Endothelial cell of umbilical vein (primary cell): ENCODE measurements at regions of chr17 and their contacts with region 1.

Region 1: DNA sequence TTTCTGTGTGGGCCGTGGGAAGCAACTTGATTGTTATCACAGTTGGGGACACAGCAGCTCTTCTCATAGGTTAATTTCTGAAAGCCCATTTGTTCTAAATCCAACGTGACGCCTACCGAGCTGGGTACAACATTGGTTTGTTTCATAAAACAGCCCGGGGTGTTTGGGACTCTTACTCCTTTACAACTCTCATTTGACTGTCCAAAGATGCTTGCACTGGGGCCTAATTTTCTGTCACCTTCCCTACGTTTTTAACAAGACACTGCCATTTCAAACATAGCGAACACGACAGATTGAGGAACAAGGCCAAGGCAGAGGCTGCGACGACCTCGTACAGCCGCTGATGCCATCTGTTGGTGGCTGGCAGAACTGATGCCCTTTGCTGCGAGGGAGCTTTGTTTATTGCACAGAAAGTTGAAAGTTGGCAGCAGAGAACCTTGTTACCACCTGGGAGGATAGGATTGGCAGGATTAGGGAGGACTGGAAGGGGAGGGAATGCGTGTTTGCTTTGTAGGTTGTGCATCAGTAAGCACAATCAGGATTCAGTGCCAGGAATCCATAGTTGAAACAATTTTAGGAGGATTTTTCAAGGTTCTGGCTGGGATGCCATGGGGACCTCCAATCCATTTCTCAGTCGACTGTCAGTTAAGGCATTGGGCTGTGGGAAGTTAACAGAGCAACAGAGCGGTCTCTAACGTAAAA is 98.3 kb downstream of the PITPNC1 start:
- DNase-seq: peak; percentile 81
- H3K4me3 ChIP-seq: no peak overlapping the region
- H3K27ac ChIP-seq: no peak overlapping the region
- H3K4me1 ChIP-seq: peaks cover 6% of the 10 kb centered on the region
- H3K27me3 ChIP-seq: peaks cover 0 to 2% of the 10 kb centered on the region in 2 experiments
- CTCF ChIP-seq: peak; percentile 96
- POLR2A ChIP-seq: no peak

Region 2: DNA sequence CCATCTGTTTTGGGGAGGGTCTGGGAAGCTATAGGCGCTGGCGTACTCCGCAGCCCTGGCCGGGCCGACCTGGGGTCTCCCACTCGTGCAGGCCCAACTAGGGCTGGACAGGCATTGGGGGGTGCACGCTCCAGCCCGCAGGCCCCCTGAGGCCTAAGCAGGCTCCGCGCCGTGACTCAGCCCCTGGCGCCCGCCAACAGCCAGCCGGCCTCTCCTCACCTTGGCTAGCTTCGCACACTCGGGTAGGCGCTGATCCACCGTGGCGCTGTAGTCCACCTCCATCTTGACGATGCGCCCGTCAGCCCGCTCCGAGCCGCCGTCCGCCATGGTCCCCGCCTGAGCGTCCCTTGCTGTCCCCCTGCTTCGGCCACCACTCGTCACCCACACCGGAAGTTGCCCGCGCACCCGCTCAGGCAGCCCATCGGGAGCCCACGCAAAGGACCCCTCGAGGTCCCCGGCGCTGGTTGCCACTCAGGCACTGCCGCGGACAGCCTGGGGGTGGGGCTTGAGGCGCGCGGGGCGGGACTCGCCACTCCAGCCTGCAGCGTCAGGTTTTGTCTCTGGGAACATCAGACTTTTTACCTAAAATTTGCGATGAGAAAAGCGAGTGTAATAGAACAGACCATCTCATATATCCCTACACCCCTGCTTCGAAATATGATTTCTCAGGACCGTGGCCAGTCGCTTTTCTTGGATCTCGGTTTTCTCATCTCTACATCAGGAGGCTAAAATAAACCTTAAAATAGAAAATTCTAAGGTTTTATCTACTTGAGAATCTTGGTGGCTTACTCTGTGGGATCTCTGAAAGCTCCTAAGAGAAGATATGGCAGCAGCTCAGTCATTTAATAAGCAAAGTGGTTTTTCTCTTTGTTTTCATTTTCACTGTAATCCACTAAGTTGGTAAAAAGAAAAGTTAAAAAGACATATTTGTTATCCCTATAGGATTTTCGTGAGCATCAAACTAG is 108.9 kb before region 1 on chr17 and contains the start of gene PSMD12:
- CTCF ChIA-PET with region 1: interaction called, 295 read pairs
- POLR2A ChIA-PET with region 1: no interaction called
- dilution Hi-C with region 1: no loop called
- intact Hi-C with region 1: no loop called
- DNase-seq: peak; percentile 92
- H3K4me3 ChIP-seq: peak within 1 kb of the TSS; percentile 60 to 93 (median 64)
- H3K27ac ChIP-seq: peak within 1 kb of the TSS; percentile 80
- H3K4me1 ChIP-seq: peaks cover 14% of the 10 kb centered on the region
- H3K27me3 ChIP-seq: no peaks in the 10 kb centered on the region
- CTCF ChIP-seq: no peak
- POLR2A ChIP-seq: peak; percentile 76
- total RNA-seq, gene PSMD12: 69.8 and 73.0 TPM in 2 replicates

Region 3: GRCh38 chr17:67421869-67422273 is 53.5 kb before region 1 on chr17:
- CTCF ChIA-PET with region 1: interaction called, 15 read pairs
- POLR2A ChIA-PET with region 1: no interaction called
- dilution Hi-C with region 1: no loop called
- intact Hi-C with region 1: no loop called
- DNase-seq: peak; percentile 81
- H3K4me3 ChIP-seq: no peak overlapping the region
- H3K27ac ChIP-seq: peak overlapping the region; percentile 59
- H3K4me1 ChIP-seq: peaks cover 17% of the 10 kb centered on the region
- H3K27me3 ChIP-seq: no peaks in the 10 kb centered on the region
- CTCF ChIP-seq: no peak
- POLR2A ChIP-seq: no peak

Region 4: DNA sequence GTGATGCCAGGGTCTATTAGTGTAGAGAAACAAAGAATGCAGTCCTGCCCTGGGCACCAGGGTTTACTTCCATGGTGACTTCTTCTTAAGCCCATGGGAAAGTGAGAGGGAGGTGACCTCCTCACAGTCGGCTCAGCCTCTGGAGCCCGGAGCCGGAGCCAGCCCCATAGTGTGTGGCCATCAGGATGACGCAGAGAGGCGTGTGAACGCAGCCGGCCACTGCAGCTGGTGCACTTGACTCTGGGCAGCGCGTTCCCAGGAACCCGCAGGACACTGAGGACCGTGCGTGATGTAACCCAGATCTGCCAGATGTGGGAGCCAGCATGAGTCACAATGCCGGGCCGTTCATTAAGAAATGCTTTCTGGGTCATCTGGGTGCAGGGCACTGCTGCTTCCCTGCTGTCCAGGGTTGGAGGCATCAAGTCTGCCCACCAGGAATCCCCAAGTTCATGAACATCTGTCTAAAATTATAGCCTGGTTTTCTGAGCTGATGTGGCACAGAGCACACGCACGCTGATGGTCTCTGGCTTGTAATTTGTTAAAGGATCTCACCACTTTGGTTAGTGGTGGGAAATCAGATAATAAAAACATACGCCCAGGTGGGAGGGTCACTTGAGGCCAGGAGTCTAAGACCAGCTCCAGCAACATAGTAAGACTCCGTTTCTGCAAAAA is 15.8 kb after region 1 on chr17:
- CTCF ChIA-PET with region 1: interaction called, 14 read pairs
- POLR2A ChIA-PET with region 1: no interaction called
- dilution Hi-C with region 1: no loop called
- intact Hi-C with region 1: no loop called
- DNase-seq: peak; percentile 54
- H3K4me3 ChIP-seq: no peak overlapping the region
- H3K27ac ChIP-seq: no peak overlapping the region
- H3K4me1 ChIP-seq: no peaks in the 10 kb centered on the region
- H3K27me3 ChIP-seq: peaks cover 0 to 7% of the 10 kb centered on the region in 2 experiments
- CTCF ChIP-seq: no peak
- POLR2A ChIP-seq: no peak

Region 5: GRCh38 chr17:67602956-67603355 is 127.6 kb after region 1 on chr17:
- CTCF ChIA-PET with region 1: interaction called, 9 read pairs
- POLR2A ChIA-PET with region 1: no interaction called
- dilution Hi-C with region 1: no loop called
- intact Hi-C with region 1: loop called (anchors 2 kb)
- DNase-seq: peak; percentile 32
- H3K4me3 ChIP-seq: no peak overlapping the region
- H3K27ac ChIP-seq: no peak overlapping the region
- H3K4me1 ChIP-seq: peaks cover 3% of the 10 kb centered on the region
- H3K27me3 ChIP-seq: peaks cover 0 to 7% of the 10 kb centered on the region in 2 experiments
- CTCF ChIP-seq: peak; percentile 19 to 41
- POLR2A ChIP-seq: no peak

Region 6: DNA sequence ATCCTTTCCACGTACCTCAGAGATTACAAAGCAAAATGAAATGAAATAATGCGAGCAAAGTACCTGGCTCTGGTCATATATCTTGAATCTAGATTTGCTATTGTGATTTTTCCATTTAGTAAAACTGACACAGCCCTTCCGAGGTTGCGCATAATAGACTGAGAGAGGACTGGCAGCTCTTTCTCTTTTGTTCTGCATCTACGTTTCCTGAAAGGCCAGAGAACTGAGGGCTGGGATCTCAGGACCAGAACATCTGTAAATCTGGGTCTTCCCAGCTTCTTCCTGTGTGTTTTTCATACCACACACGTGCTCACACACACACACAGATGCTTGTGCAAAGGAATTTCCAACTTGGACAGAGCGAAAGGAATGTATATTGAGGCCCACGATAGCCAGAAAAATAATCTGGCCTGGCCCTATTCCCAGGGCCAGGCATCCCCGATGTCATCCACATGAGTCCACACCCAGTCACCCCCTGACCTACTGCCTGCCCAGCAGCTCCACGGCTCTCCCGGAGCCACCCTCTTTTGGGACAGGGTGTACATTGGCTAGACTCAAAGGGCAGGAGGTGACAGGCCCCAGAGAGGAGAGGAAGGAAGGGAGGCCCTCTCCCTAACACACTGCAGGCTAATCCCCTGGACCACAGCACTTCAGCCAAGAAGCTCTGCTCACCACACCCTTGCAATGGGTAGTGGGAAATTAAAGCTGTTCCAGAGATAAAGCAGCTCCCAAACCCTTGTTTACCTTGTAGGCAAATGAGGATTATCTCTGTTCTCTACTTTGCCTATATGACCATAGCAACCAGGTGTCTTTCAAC is 284.2 kb after region 1 on chr17:
- CTCF ChIA-PET with region 1: no interaction called
- POLR2A ChIA-PET with region 1: no interaction called
- dilution Hi-C with region 1: no loop called
- intact Hi-C with region 1: no loop called
- DNase-seq: no peak
- H3K4me3 ChIP-seq: no peak overlapping the region
- H3K27ac ChIP-seq: no peak overlapping the region
- H3K4me1 ChIP-seq: no peaks in the 10 kb centered on the region
- H3K27me3 ChIP-seq: no peaks in the 10 kb centered on the region
- CTCF ChIP-seq: no peak
- POLR2A ChIP-seq: no peak